A549 (cell line): ENCODE measurements at regions of chr12 and their contacts with region 1.

Region 1: DNA sequence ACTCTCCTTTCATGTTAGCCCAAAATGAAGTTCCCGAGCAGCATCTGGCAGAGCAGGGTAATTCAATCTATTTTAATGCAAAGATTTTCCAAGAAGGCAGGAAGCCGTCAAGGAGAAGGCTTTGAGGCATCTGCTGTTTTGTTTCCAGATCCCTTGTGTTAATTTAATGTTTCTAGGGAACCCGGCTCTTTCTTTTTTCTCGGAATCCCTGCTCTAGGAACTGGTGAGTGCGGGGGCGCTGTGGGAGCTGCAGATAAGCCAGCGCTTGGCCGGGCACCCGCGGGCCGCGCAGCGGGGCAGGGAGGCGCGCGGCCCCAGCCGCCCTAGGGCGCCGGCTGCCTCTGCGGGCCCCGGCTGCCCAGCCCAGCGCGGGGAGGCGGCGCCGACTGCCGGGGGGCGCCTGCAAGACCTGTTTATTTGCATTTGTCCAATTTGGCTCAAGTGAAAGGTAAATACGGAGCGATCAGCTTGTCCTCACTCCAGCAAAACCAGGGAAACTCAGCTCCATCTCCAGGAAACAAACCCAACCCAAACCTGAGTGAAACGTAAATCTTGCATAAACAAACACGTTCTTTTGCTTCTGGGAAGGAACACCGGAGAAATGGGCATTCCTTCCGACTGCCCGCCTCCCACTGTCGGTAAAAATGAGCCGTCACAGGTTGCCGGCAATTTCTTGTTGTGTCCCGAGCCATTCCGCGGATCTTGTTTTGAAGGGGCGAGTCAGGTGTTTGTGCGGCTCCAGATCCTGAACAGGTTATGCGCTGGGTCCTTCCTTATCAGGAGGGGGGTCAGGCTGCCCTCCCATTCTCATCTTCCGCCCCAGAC is 65.1 kb downstream of the CRADD start:
- DNase-seq: peak; percentile 71 to 81
- ATAC-seq: peak; percentile 98
- H3K4me3 ChIP-seq: peak overlapping the region; percentile 59
- H3K27ac ChIP-seq: peak overlapping the region; percentile 73 to 87
- H3K4me1 ChIP-seq: peaks cover 21% of the 10 kb centered on the region
- CTCF ChIP-seq: peak; percentile 88
- EP300 ChIP-seq: no peak
- POLR2A ChIP-seq: no peak
- RAD21 ChIP-seq: peak; percentile 36 to 80

Region 2: DNA sequence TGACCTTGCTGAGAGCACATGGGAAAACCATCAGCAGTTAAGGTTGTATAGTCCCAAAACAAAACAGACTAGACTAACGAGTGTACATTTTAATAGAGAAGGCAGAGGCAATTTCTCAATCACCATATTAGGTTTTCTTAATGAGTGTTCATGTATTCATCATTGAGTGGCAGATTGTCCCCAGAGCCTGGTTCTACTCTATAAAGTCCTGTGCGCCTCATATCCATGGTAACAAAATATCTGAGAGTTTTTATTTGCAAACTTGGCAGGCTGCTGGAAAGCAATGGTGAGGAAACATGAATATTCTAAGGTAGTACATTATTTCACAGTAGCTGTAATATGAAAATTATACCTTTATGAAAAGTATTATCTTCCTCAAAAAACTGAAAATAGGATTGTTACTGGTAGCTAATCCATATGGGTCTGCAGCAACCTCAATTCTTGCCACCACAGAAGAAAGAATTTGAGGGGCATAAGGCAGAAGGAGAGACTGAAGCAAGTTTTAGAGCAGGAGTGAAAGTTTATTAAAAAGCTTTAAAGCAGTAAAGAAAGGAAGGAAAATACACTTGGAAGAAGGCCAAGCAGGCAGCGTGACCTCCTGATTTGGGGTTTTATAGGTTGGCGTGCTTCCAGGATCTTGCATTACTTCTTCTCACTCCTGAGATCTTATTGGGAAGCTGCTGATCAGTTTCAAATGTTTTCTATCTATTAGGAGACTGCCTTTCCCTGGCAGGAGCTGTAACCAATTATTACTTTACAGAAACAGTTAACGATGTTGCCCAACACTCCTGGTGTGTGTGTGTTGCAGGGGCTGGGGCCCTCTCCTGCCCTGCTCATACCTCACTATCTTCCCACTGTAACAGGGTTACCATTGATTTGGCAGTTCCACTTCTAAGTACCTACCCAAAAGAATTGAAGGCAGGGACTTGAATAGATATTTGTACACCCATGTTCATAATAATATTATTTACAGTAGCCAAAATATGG is 518.6 kb before region 1 on chr12:
- CTCF ChIA-PET with region 1: no interaction called
- POLR2A ChIA-PET with region 1: no interaction called
- DNase-seq: no peak
- ATAC-seq: no peak
- H3K4me3 ChIP-seq: no peak overlapping the region
- H3K27ac ChIP-seq: no peak overlapping the region
- H3K4me1 ChIP-seq: no peaks in the 10 kb centered on the region
- CTCF ChIP-seq: no peak
- EP300 ChIP-seq: no peak
- POLR2A ChIP-seq: no peak
- RAD21 ChIP-seq: no peak

Region 3: DNA sequence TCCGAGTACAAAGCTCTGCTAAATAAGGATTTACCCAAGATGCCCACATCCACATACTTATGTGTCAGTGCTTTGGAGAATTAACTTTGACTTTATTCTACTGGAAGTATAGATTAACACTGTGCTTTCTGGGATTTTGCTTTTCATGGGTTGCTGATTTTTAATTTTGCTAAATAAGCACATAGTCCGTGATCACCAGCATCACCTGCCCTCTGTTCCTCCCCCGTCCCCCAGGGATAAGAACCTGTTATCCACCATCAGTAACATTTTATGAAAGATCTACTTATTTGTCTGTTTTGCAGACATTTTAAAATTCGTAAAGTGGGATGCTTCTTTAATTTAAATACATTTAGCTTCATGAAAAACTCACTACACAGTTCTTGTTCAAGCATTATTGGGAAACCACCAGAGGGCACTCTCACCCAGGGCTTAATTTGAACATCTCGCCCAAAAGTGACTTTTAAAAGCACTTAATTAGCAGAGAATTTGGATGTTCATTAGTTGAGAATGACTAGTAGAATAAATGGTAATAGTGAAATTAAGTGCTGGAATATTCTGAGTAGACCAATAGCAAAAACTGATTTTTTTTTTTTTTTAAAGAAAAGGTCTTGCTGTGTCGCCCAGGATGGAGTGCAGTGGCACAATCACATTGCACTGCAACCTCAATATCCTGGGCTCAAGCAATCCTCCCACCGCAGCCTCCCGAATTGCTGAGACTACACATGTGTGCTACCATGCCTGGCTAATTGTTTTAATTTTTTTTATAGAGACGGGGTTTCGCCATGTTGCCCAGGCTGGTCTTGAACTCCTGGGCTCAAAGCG is 239.3 kb before region 1 on chr12:
- CTCF ChIA-PET with region 1: interaction called, 14 read pairs
- POLR2A ChIA-PET with region 1: no interaction called
- DNase-seq: peak in 1 of 2 experiments; percentile 52
- ATAC-seq: peak; percentile 39 to 70; a peak in 3 of 6 replicates
- H3K4me3 ChIP-seq: no peak overlapping the region
- H3K27ac ChIP-seq: no peak overlapping the region
- H3K4me1 ChIP-seq: no peaks in the 10 kb centered on the region
- CTCF ChIP-seq: peak; percentile 97
- EP300 ChIP-seq: no peak
- POLR2A ChIP-seq: no peak
- RAD21 ChIP-seq: peak; percentile 94 to 96

Region 4: DNA sequence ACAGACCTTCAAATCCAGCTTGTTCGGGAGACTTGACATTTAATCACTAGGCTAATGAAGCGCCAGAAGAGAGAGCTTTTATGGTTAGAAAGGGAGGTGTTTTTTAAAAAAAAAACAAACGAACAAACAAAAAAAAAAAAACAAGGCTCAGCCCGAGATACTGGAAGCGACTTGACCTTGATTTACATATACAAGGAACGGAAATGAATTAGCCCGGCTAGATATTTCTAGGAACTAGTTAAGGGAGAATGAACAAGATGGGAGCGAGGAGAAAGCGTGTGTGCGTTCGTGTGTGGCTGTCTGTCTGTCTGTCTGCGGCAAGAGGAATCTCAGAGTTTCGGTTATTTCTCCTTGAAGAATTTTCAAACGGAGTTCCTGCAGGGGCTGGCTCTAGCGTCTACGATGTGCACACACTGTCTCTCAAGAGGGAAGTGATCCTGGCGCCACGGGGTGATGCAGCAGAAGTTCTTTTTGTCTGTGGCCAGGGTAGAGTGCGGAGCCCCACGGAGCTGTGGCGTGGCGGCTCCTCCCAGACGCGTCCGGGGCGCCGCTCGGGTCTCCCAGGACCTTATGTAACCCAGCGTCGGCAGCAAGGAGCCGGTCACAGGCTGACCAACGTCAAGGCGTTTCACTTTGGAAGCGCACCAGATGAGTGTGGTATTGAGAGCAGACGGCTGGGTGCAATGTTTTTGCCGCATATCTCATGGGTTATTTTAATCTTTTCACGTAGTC is 151.0 kb before region 1 on chr12:
- CTCF ChIA-PET with region 1: interaction called, 11 read pairs
- POLR2A ChIA-PET with region 1: no interaction called
- DNase-seq: peak; percentile 80 to 82
- ATAC-seq: peak; percentile 94 to 97
- H3K4me3 ChIP-seq: peak overlapping the region; percentile 56
- H3K27ac ChIP-seq: peak overlapping the region; percentile 70 to 86
- H3K4me1 ChIP-seq: no peaks in the 10 kb centered on the region; the same call in 2 of the 3 replicates
- CTCF ChIP-seq: no peak
- EP300 ChIP-seq: no peak
- POLR2A ChIP-seq: peak; percentile 51
- RAD21 ChIP-seq: peak in 1 of 2 experiments; percentile 34; a peak in 1 of 5 replicates

Region 5: GRCh38 chr12:93677195-93678064 is 64.9 kb before region 1 on chr12 and contains the start of gene CRADD:
- CTCF ChIA-PET with region 1: no interaction called
- POLR2A ChIA-PET with region 1: interaction called, 10 read pairs
- DNase-seq: peak; percentile 76 to 99
- ATAC-seq: peak; percentile 90 to 96
- H3K4me3 ChIP-seq: peak within 1 kb of the TSS; percentile 79
- H3K27ac ChIP-seq: peak within 1 kb of the TSS; percentile 92 to 93
- H3K4me1 ChIP-seq: peaks cover 7% of the 10 kb centered on the region; the same call in 2 of the 3 replicates
- CTCF ChIP-seq: no peak
- EP300 ChIP-seq: no peak
- POLR2A ChIP-seq: peak; percentile 59
- RAD21 ChIP-seq: no peak; a peak in 2 of 5 replicates
- polyA plus RNA-seq, gene CRADD: 21.8 and 23.0 TPM in 2 replicates

Region 6: GRCh38 chr12:93766796-93767523 is 24.6 kb after region 1 on chr12:
- CTCF ChIA-PET with region 1: interaction called, 12 read pairs
- POLR2A ChIA-PET with region 1: no interaction called
- DNase-seq: peak; percentile 53 to 66
- ATAC-seq: peak; percentile 83 to 93
- H3K4me3 ChIP-seq: no peak overlapping the region
- H3K27ac ChIP-seq: peak overlapping the region; percentile 29 to 58; a peak in 4 of 6 replicates
- H3K4me1 ChIP-seq: peaks cover 15% of the 10 kb centered on the region
- CTCF ChIP-seq: peak; percentile 82
- EP300 ChIP-seq: no peak
- POLR2A ChIP-seq: no peak
- RAD21 ChIP-seq: peak; percentile 89 to 95